ENCODE measurements at regions of chr3 and their contacts with region 1.

Region 1: GRCh38 chr3:97793420-97794019 is 28.3 kb upstream of the CRYBG3 start:
- DNase-seq: no peak
- H3K4me3 ChIP-seq: no peak overlapping the region
- H3K27ac ChIP-seq: no peak overlapping the region
- H3K4me1 ChIP-seq: no peaks in the 10 kb centered on the region
- H3K27me3 ChIP-seq: no peaks in the 10 kb centered on the region
- CTCF ChIP-seq: peak; percentile 80 to 89 (median 80)
- POLR2A ChIP-seq: no peak

Region 2: DNA sequence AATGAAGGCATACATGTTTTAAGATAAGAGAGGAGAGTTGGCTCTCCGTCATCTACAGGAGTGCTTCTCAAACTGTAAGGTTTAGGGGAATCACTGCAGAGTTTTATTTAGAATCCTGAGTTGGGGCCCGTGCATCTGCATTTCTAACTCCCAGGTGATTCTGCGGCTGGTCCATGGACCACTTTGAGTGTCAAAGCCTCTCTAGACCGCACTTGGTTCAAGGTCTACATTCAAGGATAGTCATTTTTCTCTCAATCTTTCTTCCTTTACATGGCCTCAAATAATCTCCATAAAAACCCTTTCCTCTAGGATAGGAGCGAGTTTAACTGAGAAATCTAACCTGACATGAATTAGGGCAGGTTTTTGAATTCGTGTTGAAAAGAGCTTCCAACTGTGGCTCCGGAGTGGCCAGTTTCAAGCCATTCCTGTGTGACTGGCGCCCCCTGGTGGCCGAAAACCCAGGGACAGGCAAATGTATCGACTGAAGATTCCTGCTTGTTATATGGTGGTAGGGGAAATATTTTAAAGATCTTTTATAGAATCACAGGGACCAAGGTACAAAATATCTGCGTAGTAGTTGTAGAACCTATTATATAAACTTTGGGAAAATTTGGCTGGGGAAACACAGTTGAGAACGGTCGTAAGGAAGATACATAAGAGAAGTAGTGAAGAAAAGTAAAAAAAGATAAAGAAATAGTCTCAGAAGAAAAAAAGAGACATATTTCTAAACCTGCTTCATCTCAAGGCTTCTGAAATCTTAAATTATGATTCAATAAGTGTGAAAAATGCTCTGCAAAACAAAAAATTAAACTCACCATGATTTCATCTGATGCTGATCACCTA is 229.7 kb after region 1 on chr3:
- intact Hi-C with region 1: loop called (anchors 5 kb)
- DNase-seq: no peak
- H3K4me3 ChIP-seq: no peak overlapping the region
- H3K27ac ChIP-seq: no peak overlapping the region
- H3K4me1 ChIP-seq: no peaks in the 10 kb centered on the region
- H3K27me3 ChIP-seq: no peaks in the 10 kb centered on the region
- CTCF ChIP-seq: peak; percentile 82 to 96 (median 94)
- POLR2A ChIP-seq: no peak

Region 3: DNA sequence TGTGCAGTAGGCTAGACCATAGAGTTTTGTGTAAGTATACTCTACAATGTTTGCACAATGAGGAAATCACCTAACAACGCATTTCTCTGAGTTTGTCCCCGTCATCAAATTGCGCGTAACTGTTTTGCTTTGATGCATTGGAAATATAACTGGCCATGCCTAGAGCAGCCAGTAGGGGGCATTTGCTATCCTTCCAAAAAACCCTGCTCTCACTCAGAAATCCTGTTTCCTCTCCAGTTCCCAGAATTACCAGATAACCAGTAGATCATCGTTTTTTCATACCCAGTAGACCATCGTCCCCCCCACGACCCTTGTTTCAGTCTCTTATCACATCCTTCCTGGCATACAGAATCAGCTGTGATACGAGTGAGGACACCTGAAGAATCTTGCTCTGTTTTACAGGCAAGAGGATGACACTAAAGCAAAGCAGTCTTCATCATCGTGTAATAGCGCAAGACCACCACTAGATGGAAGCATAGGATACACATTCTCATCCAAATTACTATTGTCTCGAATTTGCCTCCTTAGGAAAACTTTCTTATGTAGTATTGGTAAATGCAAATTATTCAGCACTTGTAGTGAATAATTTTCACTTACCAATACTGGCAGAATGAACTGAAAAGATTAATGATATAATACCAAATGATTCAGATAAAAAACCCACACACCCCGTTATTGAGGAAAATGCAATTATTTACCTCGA is 246.0 kb after region 1 on chr3:
- intact Hi-C with region 1: no loop called
- DNase-seq: no peak
- H3K4me3 ChIP-seq: peak overlapping the region; percentile 20 to 23
- H3K27ac ChIP-seq: no peak overlapping the region
- H3K4me1 ChIP-seq: no peaks in the 10 kb centered on the region
- H3K27me3 ChIP-seq: no peaks in the 10 kb centered on the region
- CTCF ChIP-seq: peak; percentile 69 to 97 (median 75)
- POLR2A ChIP-seq: no peak

Region 4: DNA sequence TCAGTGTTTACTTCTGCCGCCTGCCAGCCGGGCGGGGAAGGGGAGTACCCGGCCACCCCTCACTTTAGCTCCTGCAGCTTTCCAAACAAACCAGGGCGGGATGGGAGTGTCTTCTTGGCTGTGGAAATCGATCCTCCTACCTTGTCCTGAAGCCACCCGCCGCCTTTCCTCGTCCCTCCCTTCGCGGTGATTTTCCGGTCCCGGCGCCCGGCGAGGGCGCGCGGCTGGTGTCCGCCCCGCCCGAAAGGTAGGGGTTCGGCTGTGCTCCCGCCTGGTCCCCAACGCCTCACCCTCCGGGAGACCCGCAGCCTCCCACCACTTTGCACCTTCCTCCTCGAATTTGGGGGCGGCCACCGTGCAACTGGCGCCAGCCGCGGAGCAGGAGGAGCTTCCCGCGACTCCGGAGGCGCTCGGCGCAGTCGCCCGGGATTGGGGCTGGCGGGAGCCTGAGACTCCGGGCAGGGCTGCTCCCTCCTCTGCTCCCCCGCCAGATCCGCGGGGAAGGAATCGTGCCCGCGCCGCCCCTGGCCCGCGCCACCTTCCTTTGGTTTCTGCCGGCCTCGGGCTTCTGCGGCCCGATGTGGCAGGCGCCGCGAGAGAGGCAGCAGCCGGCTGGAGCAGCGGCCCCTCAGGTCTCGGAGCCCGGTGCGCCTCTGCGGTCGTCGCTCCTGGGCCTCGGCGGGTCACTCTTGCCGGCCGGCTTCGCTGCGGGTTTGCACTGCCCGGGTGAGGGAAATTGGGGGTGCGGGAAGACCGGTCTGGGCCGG is 938.9 kb after region 1 on chr3:
- intact Hi-C with region 1: no loop called
- DNase-seq: no peak
- H3K4me3 ChIP-seq: peak overlapping the region; percentile 77 to 78
- H3K27ac ChIP-seq: peak overlapping the region; percentile 76
- H3K4me1 ChIP-seq: peaks cover 6% of the 10 kb centered on the region
- H3K27me3 ChIP-seq: no peaks in the 10 kb centered on the region
- CTCF ChIP-seq: no peak
- POLR2A ChIP-seq: no peak

Measured in vagina (tissue), 2 donors.